Transverse colon (tissue), 4 donors: ENCODE measurements at regions of chr6 and their contacts with region 1.

Region 1: GRCh38 chr6:2938632-2939083 is 32.7 kb downstream of the SERPINB6 start:
- DNase-seq: peak; percentile 56
- H3K4me3 ChIP-seq: no peak overlapping the region
- H3K27ac ChIP-seq: no peak overlapping the region
- H3K4me1 ChIP-seq: peaks cover 0 to 10% (median 9%) of the 10 kb centered on the region in 4 donors
- H3K27me3 ChIP-seq: no peaks in the 10 kb centered on the region
- CTCF ChIP-seq: peak; percentile 23 to 55 (median 49)
- EP300 ChIP-seq: no peak
- POLR2A ChIP-seq: no peak

Region 2: GRCh38 chr6:2921520-2922115 is 17.0 kb before region 1 on chr6:
- in situ Hi-C with region 1: no loop called
- intact Hi-C with region 1: loop called (anchors 1 kb)
- DNase-seq: no peak
- H3K4me3 ChIP-seq: no peak overlapping the region
- H3K27ac ChIP-seq: no peak overlapping the region
- H3K4me1 ChIP-seq: peaks cover 0 to 5% (median 0%) of the 10 kb centered on the region in 4 donors
- H3K27me3 ChIP-seq: no peaks in the 10 kb centered on the region
- CTCF ChIP-seq: no peak
- EP300 ChIP-seq: no peak
- POLR2A ChIP-seq: no peak